Cardiac septum (tissue), 1 donor: ENCODE measurements at regions of chr22 and their contacts with region 1.

Region 1: GRCh38 chr22:27107824-27108223 is 450.4 kb downstream of the MIAT start:
- DNase-seq: no peak

Region 2: GRCh38 chr22:26828311-26828710 is 279.5 kb before region 1 on chr22:
- intact Hi-C with region 1: no loop called
- DNase-seq: no peak

Region 3: GRCh38 chr22:27212617-27213177 is 104.9 kb after region 1 on chr22:
- intact Hi-C with region 1: loop called (anchors 5 kb)
- DNase-seq: no peak